Left cardiac atrium (tissue), 4 donors: ENCODE measurements at regions of chr17 and their contacts with region 1.

Region 1: GRCh38 chr17:27446569-27447301 is 9.5 kb upstream of the KSR1 start:
- DNase-seq: peak; percentile 44
- ATAC-seq: peak in 1 of 2 donors; percentile 61

Region 2: DNA sequence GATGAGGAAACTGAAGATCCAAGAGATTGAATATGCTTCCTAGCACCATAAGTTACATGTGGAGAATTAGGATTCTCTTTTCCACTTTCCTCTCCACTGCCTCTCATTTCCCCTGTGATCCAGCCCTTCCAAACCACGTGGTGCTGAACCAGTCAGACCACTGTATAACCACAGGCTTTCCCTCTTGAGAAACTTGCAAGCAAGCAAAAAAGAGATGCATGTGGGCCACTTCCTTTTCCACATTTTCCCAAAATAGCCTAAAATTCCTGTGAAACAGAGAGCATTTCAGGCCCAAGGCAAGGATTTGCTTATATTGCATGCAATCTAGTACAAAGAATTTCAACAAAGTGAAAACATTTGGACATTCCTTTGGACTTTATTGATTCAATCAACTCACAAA is 49.8 kb before region 1 on chr17:
- intact Hi-C with region 1: loop called in 1 of 2 experiments (anchors 10 kb)
- DNase-seq: no peak
- ATAC-seq: peak; percentile 56 to 57